Caco-2 (cell line): ENCODE measurements at regions of chr14 and their contacts with region 1.

Region 1: GRCh38 chr14:26276757-26277156 is 321.1 kb downstream of the NOVA1 start:
- DNase-seq: peak in 1 of 2 experiments; percentile 39
- H3K4me3 ChIP-seq: no peak overlapping the region
- H3K4me3 Mint-ChIP-seq: no peak overlapping the region
- H3K27ac Mint-ChIP-seq: no peak overlapping the region
- H3K4me1 ChIP-seq: peaks cover 10% of the 10 kb centered on the region
- H3K4me1 Mint-ChIP-seq: peaks cover 8% of the 10 kb centered on the region
- H3K27me3 ChIP-seq: no peaks in the 10 kb centered on the region
- H3K27me3 Mint-ChIP-seq: no peaks in the 10 kb centered on the region
- CTCF ChIP-seq: peak; percentile 35 to 53

Region 2: DNA sequence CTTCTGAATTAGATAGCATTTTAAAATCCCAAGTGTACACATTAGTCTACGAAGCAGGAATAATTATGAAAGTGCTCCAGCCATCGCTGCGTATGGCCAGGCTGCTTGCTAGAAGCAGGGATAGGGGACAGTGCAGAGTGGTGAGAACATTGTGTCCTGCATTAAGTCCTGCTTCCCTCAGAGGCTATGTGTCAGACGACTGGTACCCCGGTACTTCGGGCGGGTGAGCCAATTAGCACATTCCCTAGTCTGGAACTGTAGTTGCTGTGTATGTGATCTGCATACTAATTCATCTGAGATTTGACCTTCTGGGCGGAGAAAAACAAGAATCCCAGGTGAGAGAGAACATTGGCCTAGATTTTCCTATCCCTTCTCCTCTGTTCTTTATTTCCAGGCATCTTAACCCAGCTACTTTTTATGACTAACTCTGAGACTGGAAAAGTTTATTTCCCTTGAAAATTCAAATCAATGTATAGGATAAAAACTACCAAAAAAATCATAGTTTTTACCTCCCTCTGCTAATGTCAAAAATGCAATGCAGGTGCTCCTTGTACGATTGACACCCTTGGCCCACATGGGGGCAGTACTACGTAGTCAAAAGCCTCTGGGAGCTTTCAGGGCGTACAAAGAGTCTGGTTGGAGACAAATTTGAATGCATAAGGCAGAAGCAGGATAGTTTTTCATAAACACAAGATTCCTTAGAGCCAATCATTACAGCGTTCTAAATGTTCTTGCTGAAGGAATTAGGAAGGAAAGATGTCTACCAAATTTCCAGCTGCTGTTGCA is 443.2 kb before region 1 on chr14:
- CTCF ChIA-PET with region 1: no interaction called
- POLR2A ChIA-PET with region 1: no interaction called
- intact Hi-C with region 1: loop called (anchors 2 kb)
- DNase-seq: peak; percentile 44 to 47
- H3K4me3 ChIP-seq: no peak overlapping the region
- H3K4me3 Mint-ChIP-seq: no peak overlapping the region
- H3K27ac Mint-ChIP-seq: no peak overlapping the region
- H3K4me1 ChIP-seq: no peaks in the 10 kb centered on the region
- H3K4me1 Mint-ChIP-seq: peaks cover 7% of the 10 kb centered on the region
- H3K27me3 ChIP-seq: no peaks in the 10 kb centered on the region
- H3K27me3 Mint-ChIP-seq: peaks cover 5% of the 10 kb centered on the region
- CTCF ChIP-seq: peak; percentile 44 to 71

Region 3: DNA sequence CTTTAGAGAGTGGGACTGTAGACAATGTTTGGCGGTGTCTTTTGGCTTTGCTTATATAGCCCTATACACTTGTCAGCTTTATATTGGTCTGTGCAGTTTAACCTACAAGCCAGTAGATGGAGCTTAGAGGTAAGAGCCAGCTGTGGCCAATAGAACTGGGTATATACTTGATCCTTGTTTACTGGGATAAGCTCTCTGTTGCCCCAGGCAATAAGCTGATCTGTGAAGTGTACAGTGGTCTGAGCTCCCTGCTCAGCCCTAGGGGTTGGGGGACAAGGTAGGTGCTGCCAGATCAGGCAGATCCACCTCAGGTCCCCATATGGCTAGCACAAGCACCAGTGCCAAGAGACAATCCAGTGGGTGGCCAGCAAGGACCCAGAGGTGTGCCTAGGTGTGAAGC is 113.0 kb before region 1 on chr14:
- CTCF ChIA-PET with region 1: interaction called, 6 read pairs
- POLR2A ChIA-PET with region 1: no interaction called
- intact Hi-C with region 1: loop called (anchors 1 kb)
- DNase-seq: peak; percentile 22 to 29
- H3K4me3 ChIP-seq: no peak overlapping the region
- H3K4me3 Mint-ChIP-seq: no peak overlapping the region
- H3K27ac Mint-ChIP-seq: no peak overlapping the region
- H3K4me1 ChIP-seq: no peaks in the 10 kb centered on the region
- H3K4me1 Mint-ChIP-seq: no peaks in the 10 kb centered on the region
- H3K27me3 ChIP-seq: no peaks in the 10 kb centered on the region
- H3K27me3 Mint-ChIP-seq: peaks cover 6% of the 10 kb centered on the region
- CTCF ChIP-seq: peak; percentile 43 to 47

Region 4: DNA sequence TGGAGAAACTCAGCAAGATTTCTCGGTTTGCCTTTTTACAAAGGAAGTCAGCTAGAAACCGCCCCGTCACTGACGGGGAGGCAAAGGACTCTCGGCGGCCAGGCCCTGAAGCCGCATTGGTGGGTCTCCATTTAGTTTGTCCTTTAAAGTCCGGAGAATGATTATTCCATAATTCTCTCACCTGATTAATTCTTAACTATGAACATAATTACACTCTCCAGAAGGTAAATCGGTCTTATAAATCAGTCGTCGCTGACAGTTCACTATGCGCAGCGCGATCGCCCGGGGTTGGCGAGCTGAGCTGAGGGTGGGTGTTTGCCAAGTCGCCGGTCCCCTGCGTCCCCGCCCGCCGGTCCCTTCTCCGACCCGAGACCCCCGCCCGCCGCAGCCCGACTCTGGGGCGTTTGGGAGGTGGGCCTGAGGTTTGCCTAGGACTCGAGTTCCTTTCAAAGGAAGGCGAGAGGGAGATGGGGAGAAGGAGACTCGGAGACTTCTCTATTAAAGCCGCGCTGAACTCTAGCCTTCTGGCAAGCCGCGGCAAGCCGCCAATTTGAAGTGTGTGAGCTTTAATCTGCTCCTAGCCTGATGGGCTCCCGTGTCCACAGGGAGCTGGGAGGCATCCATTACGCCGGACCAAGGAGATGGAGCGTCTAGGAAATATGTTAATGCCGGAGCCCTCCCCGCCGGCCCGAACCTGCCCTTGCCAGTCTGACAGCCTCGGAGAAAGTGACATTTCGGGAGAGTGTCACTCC is 71.9 kb before region 1 on chr14:
- CTCF ChIA-PET with region 1: no interaction called
- POLR2A ChIA-PET with region 1: no interaction called
- intact Hi-C with region 1: loop called (anchors 5 kb)
- DNase-seq: no peak
- H3K4me3 ChIP-seq: no peak overlapping the region
- H3K4me3 Mint-ChIP-seq: no peak overlapping the region
- H3K27ac Mint-ChIP-seq: no peak overlapping the region
- H3K4me1 ChIP-seq: no peaks in the 10 kb centered on the region
- H3K4me1 Mint-ChIP-seq: no peaks in the 10 kb centered on the region
- H3K27me3 ChIP-seq: no peaks in the 10 kb centered on the region; the same call in 1 of the 2 replicates
- H3K27me3 Mint-ChIP-seq: peaks cover 16% of the 10 kb centered on the region
- CTCF ChIP-seq: no peak

Region 5: GRCh38 chr14:26389646-26390508 is 113.1 kb after region 1 on chr14:
- CTCF ChIA-PET with region 1: no interaction called
- POLR2A ChIA-PET with region 1: no interaction called
- intact Hi-C with region 1: no loop called
- DNase-seq: no peak
- H3K4me3 ChIP-seq: no peak overlapping the region
- H3K4me3 Mint-ChIP-seq: no peak overlapping the region
- H3K27ac Mint-ChIP-seq: no peak overlapping the region
- H3K4me1 ChIP-seq: peaks cover 11% of the 10 kb centered on the region; the same call in 1 of the 2 replicates
- H3K4me1 Mint-ChIP-seq: peaks cover 10% of the 10 kb centered on the region
- H3K27me3 ChIP-seq: no peaks in the 10 kb centered on the region
- H3K27me3 Mint-ChIP-seq: no peaks in the 10 kb centered on the region
- CTCF ChIP-seq: no peak